ENCODE measurements at regions of chr14 and their contacts with region 1.

Region 1: GRCh38 chr14:54686219-54686870 is 119.4 kb downstream of the SAMD4A start:
- DNase-seq: peak; percentile 85 to 86
- H3K4me3 ChIP-seq: no peak overlapping the region
- H3K27ac ChIP-seq: peak overlapping the region; percentile 78 to 91
- H3K4me1 ChIP-seq: peaks cover 0 to 89% (median 51%) of the 10 kb centered on the region in 4 donors
- H3K27me3 ChIP-seq: no peaks in the 10 kb centered on the region
- CTCF ChIP-seq: no peak

Region 2: DNA sequence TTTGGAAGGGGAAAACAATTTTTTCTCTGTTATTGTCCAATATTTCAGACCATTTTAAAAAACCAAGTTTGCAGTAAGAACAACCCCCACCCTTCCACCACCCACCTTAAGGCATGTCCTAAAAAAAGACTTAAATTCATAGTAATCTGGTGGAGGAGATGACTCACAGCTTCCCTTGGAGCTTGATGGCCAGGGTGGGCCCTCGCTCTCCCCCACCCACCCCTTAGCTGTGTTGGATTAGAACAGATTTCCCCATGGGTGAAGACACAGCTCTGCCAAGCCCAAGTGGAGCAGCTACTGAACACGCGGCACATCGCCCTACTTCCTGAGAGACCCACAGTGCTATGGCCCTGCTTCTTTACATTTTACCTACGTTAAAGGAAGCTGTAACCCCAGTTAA is 76.0 kb after region 1 on chr14:
- intact Hi-C with region 1: no loop called
- DNase-seq: no peak
- H3K4me3 ChIP-seq: no peak overlapping the region
- H3K27ac ChIP-seq: peak overlapping the region in 1 of 2 donors; percentile 30
- H3K4me1 ChIP-seq: peaks cover 0 to 11% (median 0%) of the 10 kb centered on the region in 4 donors
- H3K27me3 ChIP-seq: no peaks in the 10 kb centered on the region
- CTCF ChIP-seq: no peak

Region 3: DNA sequence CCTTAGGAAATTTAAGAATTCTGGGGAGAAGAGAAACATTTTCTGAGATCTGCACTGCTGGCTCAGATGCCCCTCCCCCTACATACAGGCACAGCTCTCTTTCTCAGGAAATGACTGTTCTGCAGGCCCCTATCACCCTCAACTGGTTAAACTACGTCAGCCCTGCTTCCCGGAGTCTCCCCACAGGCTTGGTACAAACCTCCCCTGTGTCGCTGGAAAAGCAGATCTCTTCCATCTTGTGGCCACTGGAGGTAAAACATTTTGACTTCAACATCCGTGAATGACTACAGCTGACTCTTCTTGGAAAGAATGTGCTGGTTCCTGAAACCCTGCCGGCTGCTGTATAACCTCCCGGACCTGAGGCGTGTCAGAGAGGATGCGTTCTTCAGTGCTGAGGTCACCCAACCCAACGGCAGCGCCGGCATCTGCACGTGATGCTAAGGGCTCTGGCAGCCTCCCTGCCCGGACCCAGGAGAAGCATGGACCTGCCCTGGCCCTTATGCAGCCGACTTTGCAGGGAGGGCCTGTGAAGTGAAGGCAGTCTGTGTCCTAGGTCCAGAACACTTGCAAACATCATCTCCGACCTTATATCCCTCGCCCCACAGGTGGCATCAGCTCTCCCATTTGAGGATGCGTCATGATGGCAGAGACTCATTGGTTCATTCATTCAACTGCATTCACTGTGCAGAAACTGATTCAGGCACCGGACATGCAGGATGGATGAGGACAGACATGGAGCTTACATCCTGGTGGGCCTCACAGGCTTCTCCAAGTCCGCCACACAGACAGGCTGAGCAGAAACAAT is 87.0 kb after region 1 on chr14:
- intact Hi-C with region 1: loop called (anchors 5 kb)
- DNase-seq: peak; percentile 85 to 92
- H3K4me3 ChIP-seq: peak overlapping the region in 1 of 2 donors; percentile 8
- H3K27ac ChIP-seq: peak overlapping the region; percentile 84 to 88
- H3K4me1 ChIP-seq: peaks cover 0 to 88% (median 56%) of the 10 kb centered on the region in 4 donors
- H3K27me3 ChIP-seq: no peaks in the 10 kb centered on the region
- CTCF ChIP-seq: peak; percentile 63 to 90

Region 4: GRCh38 chr14:54839701-54840119 is 153.4 kb after region 1 on chr14:
- intact Hi-C with region 1: no loop called
- DNase-seq: peak; percentile 82
- H3K4me3 ChIP-seq: no peak overlapping the region
- H3K27ac ChIP-seq: peak overlapping the region; percentile 4 to 54
- H3K4me1 ChIP-seq: peaks cover 0 to 30% (median 13%) of the 10 kb centered on the region in 4 donors
- H3K27me3 ChIP-seq: no peaks in the 10 kb centered on the region
- CTCF ChIP-seq: no peak

Region 5: DNA sequence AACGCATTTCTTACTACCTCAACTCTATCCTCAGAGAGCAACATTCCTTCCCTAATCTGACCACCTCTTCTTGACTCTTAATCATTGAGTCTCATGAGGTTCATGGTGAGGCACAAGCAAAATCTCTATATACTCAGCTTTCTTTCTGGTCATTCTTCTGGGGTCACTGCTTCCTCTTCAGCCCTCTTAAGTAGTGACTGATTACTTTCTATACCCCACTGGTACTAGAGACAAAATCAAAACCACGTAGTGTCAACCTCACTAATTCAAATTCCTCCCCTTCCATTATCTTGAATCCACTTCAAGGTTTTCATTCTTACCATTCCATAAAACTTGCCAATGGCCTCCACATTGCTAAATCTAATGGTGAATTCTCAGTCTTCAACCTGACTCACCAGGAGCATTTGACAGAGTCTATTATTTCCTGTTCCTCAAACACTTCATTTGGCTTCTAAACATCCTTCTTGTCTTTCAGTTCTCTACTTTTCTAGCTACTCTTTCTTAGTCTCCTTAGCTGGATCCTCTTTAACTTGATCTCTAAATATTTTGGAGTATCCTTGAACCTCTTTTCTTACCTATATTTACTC is 333.7 kb after region 1 on chr14:
- intact Hi-C with region 1: no loop called
- DNase-seq: no peak
- H3K4me3 ChIP-seq: no peak overlapping the region
- H3K27ac ChIP-seq: no peak overlapping the region
- H3K4me1 ChIP-seq: no peaks in the 10 kb centered on the region
- H3K27me3 ChIP-seq: no peaks in the 10 kb centered on the region
- CTCF ChIP-seq: no peak

Measured in tibial artery (tissue), 4 donors.